Prostate gland (tissue), 2 donors: ENCODE measurements at regions of chr10 and their contacts with region 1.

Region 1: DNA sequence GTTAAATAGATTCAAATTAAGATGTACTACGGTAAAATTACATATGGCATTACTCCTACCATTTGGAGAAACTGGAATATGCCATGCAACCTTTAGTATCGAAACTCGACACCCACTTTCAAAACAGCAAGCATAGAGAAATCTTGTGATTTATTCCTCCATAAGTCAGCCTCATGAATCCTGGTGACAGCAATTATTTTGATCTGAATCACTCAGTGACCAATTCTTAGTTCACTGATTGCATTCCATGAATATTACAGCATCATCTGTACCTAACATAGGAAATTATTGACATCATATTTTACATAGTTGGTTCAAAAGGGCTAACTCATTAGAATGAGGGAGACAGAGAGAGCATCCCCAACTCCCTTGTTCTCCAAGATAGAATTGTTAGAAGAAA is 89.6 kb downstream of the CACNB2 start:
- DNase-seq: no peak
- H3K4me3 ChIP-seq: no peak overlapping the region
- H3K27ac ChIP-seq: no peak overlapping the region
- H3K4me1 ChIP-seq: no peaks in the 10 kb centered on the region
- H3K27me3 ChIP-seq: no peaks in the 10 kb centered on the region
- CTCF ChIP-seq: no peak
- POLR2A ChIP-seq: no peak

Region 2: DNA sequence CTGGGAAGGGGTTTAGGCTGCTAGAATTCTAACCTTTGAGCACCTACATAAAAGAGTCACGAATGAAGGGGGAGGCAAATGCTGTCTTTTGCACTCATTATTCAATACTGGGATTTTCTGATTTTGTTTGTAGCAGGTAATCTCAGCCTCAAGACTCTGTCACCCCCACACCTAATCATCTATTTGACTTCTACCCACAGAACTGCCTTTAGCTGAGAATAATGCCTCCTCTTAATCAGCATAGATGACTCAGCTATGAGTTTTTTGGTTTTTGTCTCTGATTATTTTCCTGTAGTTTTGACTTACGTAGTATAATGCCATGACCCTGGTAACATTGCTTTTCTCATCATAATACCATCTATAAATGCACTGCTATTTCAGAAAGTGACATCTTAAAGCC is 132.3 kb before region 1 on chr10:
- intact Hi-C with region 1: no loop called
- DNase-seq: no peak
- H3K4me3 ChIP-seq: no peak overlapping the region
- H3K27ac ChIP-seq: no peak overlapping the region
- H3K4me1 ChIP-seq: no peaks in the 10 kb centered on the region
- H3K27me3 ChIP-seq: no peaks in the 10 kb centered on the region
- CTCF ChIP-seq: no peak
- POLR2A ChIP-seq: no peak

Region 3: GRCh38 chr10:18312374-18313139 is 82.7 kb after region 1 on chr10:
- intact Hi-C with region 1: loop called (anchors 10 kb)
- DNase-seq: no peak
- H3K4me3 ChIP-seq: no peak overlapping the region
- H3K27ac ChIP-seq: no peak overlapping the region
- H3K4me1 ChIP-seq: no peaks in the 10 kb centered on the region
- H3K27me3 ChIP-seq: no peaks in the 10 kb centered on the region
- CTCF ChIP-seq: peak in 3 of 4 experiments; percentile 20 to 40 (median 22)
- POLR2A ChIP-seq: no peak